ENCODE measurements at regions of chr2 and their contacts with region 1.

Region 1: GRCh38 chr2:203238704-203239526 is at the start of gene CYP20A1:
- DNase-seq: peak; percentile 85 to 94 (median 87)
- ATAC-seq: peak; percentile 92
- H3K4me3 ChIP-seq: peak within 1 kb of the TSS; percentile 63
- H3K27ac ChIP-seq: peak within 1 kb of the TSS; percentile 91
- H3K4me1 ChIP-seq: peaks cover 5 to 7% of the 10 kb centered on the region in 2 experiments; a peak in 3 of 5 replicates
- H3K27me3 ChIP-seq: no peaks in the 10 kb centered on the region
- CTCF ChIP-seq: peak; percentile 27 to 34 (median 32); a peak in 3 of 6 replicates
- EP300 ChIP-seq: no peak
- POLR2A ChIP-seq: peak; percentile 97
- RAD21 ChIP-seq: no peak; a peak in 1 of 4 replicates
- polyA plus RNA-seq, gene CYP20A1: 27.8 to 31.7 TPM

Region 2: DNA sequence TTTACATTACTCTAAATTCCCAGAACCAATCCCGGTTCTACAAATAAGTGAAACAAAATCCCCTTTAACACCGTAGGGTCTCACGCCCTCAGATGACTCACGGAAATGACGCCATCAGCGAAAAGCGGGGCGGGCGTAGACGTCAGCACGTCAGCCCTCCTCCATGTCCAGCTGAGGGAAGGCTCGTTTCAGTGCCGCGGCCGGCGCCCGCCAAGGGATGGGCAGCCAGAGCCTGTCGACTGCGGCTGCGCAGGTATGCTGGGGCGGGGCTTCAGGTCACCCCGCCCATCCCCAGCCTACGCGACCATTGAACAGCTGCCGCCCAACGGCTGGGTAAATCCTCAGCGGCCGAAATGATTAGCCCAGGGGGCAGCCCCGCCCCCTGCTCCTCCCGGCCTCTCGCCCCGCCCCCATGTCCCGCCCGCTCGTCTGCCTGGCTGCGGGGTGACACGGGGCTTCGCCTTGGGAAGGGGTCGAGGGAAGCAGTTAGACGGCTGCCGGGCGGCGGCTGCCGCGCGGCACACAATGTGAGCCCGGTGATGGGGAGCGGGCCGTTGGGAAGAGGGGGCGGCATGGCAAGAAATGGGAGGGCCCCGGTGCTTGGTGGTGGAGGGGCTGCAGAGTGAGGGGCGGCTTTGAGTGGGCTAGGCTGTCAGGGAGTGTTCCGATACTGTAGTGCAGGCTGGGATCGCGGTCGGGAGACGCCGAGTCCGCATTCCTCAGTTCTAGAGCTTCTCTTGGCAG is 224.3 kb before region 1 on chr2 and contains the start of gene NBEAL1:
- CTCF ChIA-PET with region 1: no interaction called
- POLR2A ChIA-PET with region 1: no interaction called
- in situ Hi-C with region 1: no loop called
- intact Hi-C with region 1: loop called (anchors 10 kb)
- DNase-seq: peak; percentile 90 to 95 (median 92)
- ATAC-seq: peak; percentile 88
- H3K4me3 ChIP-seq: peak within 1 kb of the TSS; percentile 87
- H3K27ac ChIP-seq: peak within 1 kb of the TSS; percentile 88
- H3K4me1 ChIP-seq: peaks cover 4 to 7% of the 10 kb centered on the region in 2 experiments; a peak in 4 of 5 replicates
- H3K27me3 ChIP-seq: no peaks in the 10 kb centered on the region
- CTCF ChIP-seq: no peak
- EP300 ChIP-seq: no peak
- POLR2A ChIP-seq: peak; percentile 72
- RAD21 ChIP-seq: no peak
- polyA plus RNA-seq, gene NBEAL1: 2.1 to 4.3 TPM

Region 3: GRCh38 chr2:203394519-203395227 is 155.8 kb after region 1 on chr2:
- CTCF ChIA-PET with region 1: no interaction called
- POLR2A ChIA-PET with region 1: no interaction called
- in situ Hi-C with region 1: no loop called
- intact Hi-C with region 1: loop called (anchors 5 kb)
- DNase-seq: peak; percentile 17 to 64 (median 44)
- ATAC-seq: peak; percentile 98
- H3K4me3 ChIP-seq: no peak overlapping the region
- H3K27ac ChIP-seq: no peak overlapping the region
- H3K4me1 ChIP-seq: no peaks in the 10 kb centered on the region; a peak in 1 of 5 replicates
- H3K27me3 ChIP-seq: no peaks in the 10 kb centered on the region
- CTCF ChIP-seq: peak; percentile 73 to 79 (median 75)
- EP300 ChIP-seq: no peak
- POLR2A ChIP-seq: no peak
- RAD21 ChIP-seq: peak; percentile 60 to 80

Region 4: DNA sequence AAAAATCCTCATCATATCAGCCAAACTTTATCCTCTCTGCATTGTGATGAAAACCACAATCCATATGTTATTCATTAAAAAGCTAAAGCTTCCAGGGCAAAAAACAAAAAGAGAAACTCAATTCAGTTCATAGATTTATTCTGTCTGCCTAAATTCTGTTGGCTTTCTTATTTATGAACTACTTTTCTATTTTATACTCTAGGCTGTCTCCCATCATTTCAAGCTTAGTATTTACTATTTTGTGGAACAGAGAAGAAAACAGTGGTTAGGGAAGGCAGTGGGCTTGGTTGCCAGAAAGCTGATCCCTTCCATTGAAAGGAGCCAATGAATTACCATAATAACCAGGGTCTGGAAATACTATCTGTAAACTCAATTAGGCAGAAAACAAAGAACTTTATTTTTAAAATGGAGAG is 224.4 kb after region 1 on chr2:
- CTCF ChIA-PET with region 1: no interaction called
- POLR2A ChIA-PET with region 1: no interaction called
- in situ Hi-C with region 1: no loop called
- intact Hi-C with region 1: no loop called
- DNase-seq: no peak
- ATAC-seq: no peak
- H3K4me3 ChIP-seq: no peak overlapping the region
- H3K27ac ChIP-seq: no peak overlapping the region
- H3K4me1 ChIP-seq: no peaks in the 10 kb centered on the region; a peak in 1 of 5 replicates
- H3K27me3 ChIP-seq: no peaks in the 10 kb centered on the region
- CTCF ChIP-seq: no peak
- EP300 ChIP-seq: no peak
- POLR2A ChIP-seq: no peak
- RAD21 ChIP-seq: no peak

Region 5: DNA sequence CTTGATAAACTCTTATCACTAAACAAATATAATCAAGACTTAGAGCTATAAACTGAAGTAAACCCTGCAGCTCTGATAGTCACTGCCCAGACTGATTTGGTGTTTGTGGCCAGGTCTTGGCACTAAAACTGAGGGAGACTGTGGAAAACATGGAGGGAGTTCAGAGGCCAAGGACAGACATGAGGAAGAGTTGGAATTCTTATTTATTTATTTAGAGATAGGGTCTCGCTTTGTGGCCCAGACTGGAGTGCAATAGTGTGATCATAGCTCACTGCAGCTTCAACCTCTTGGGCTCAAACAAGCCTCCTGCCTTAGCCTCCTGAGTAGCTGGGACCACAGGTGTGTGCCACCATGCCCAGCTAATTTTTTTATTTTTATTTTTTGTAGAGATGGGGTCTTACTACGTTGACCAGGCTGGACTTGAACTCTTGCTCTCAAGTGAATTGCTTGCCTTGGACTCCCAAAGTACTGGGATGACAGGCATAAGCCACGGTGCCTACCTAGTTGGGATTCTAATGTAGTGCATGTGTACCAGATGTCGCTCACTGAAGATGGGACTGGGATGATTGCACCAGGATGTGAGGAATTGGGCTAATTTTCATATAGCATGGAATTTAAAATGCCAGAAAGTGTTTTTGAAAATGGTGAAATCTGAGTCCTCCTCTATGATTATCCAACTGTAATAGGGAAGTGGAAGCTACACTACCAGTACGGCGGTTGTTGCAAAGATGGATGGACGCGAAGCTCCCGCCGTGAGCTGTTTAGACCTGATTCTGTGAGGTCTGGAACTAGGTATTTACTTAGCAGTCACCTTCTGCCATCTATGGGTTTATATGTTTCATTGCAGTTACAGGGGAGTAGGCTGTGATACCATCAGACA is 576.0 kb after region 1 on chr2:
- CTCF ChIA-PET with region 1: no interaction called
- POLR2A ChIA-PET with region 1: no interaction called
- in situ Hi-C with region 1: no loop called
- intact Hi-C with region 1: loop called (anchors 10 kb)
- DNase-seq: peak; percentile 35 to 48 (median 36)
- ATAC-seq: peak; percentile 83
- H3K4me3 ChIP-seq: no peak overlapping the region
- H3K27ac ChIP-seq: no peak overlapping the region
- H3K4me1 ChIP-seq: no peaks in the 10 kb centered on the region
- H3K27me3 ChIP-seq: peaks cover 0 to 4% of the 10 kb centered on the region in 2 experiments; a peak in 2 of 5 replicates
- CTCF ChIP-seq: peak; percentile 24 to 64 (median 57); a peak in 5 of 6 replicates
- EP300 ChIP-seq: no peak
- POLR2A ChIP-seq: no peak
- RAD21 ChIP-seq: peak; percentile 62 to 72

Measured in K562 (cell line).